Adrenal gland (tissue), 19 donors: ENCODE measurements at regions of chr22 and their contacts with region 1.

Region 1: GRCh38 chr22:31439808-31440207 is 40.4 kb downstream of the DRG1 start:
- DNase-seq: peak in 1 of 7 donors; percentile 50
- H3K4me3 ChIP-seq: no peak overlapping the region
- H3K27ac ChIP-seq: no peak overlapping the region
- H3K4me1 ChIP-seq: peaks cover 8 to 33% of the 10 kb centered on the region in 2 donors
- H3K27me3 ChIP-seq: no peaks in the 10 kb centered on the region
- CTCF ChIP-seq: no peak
- POLR2A ChIP-seq: no peak

Region 2: GRCh38 chr22:31489604-31490495 is 50.0 kb after region 1 on chr22 and contains the start of gene EIF4ENIF1:
- intact Hi-C with region 1: loop called in 1 of 2 experiments (anchors 10 kb)
- DNase-seq: peak; percentile 89 to 92 (median 90)
- H3K4me3 ChIP-seq: peak within 1 kb of the TSS; percentile 33 to 71 (median 64)
- H3K27ac ChIP-seq: peak within 1 kb of the TSS; percentile 89 to 99 (median 96)
- H3K4me1 ChIP-seq: peaks cover 0 to 30% of the 10 kb centered on the region in 2 donors
- H3K27me3 ChIP-seq: no peaks in the 10 kb centered on the region
- CTCF ChIP-seq: peak in 1 of 6 experiments; percentile 9
- POLR2A ChIP-seq: peak; percentile 65 to 80
- total RNA-seq, gene EIF4ENIF1: 9.2 to 32.8 (median 21.9) TPM

Region 3: GRCh38 chr22:31537019-31537535 is 97.3 kb after region 1 on chr22:
- intact Hi-C with region 1: no loop called
- DNase-seq: no peak
- H3K4me3 ChIP-seq: no peak overlapping the region
- H3K27ac ChIP-seq: no peak overlapping the region
- H3K4me1 ChIP-seq: peaks cover 12 to 14% of the 10 kb centered on the region in 2 donors
- H3K27me3 ChIP-seq: no peaks in the 10 kb centered on the region
- CTCF ChIP-seq: no peak
- POLR2A ChIP-seq: no peak

Region 4: GRCh38 chr22:31726692-31727091 is 286.9 kb after region 1 on chr22:
- intact Hi-C with region 1: no loop called
- DNase-seq: peak in 1 of 7 donors; percentile 28
- H3K4me3 ChIP-seq: no peak overlapping the region
- H3K27ac ChIP-seq: no peak overlapping the region
- H3K4me1 ChIP-seq: peaks cover 0 to 8% of the 10 kb centered on the region in 2 donors
- H3K27me3 ChIP-seq: no peaks in the 10 kb centered on the region
- CTCF ChIP-seq: no peak
- POLR2A ChIP-seq: no peak